ENCODE measurements at regions of chr2 and their contacts with region 1.

Region 1: DNA sequence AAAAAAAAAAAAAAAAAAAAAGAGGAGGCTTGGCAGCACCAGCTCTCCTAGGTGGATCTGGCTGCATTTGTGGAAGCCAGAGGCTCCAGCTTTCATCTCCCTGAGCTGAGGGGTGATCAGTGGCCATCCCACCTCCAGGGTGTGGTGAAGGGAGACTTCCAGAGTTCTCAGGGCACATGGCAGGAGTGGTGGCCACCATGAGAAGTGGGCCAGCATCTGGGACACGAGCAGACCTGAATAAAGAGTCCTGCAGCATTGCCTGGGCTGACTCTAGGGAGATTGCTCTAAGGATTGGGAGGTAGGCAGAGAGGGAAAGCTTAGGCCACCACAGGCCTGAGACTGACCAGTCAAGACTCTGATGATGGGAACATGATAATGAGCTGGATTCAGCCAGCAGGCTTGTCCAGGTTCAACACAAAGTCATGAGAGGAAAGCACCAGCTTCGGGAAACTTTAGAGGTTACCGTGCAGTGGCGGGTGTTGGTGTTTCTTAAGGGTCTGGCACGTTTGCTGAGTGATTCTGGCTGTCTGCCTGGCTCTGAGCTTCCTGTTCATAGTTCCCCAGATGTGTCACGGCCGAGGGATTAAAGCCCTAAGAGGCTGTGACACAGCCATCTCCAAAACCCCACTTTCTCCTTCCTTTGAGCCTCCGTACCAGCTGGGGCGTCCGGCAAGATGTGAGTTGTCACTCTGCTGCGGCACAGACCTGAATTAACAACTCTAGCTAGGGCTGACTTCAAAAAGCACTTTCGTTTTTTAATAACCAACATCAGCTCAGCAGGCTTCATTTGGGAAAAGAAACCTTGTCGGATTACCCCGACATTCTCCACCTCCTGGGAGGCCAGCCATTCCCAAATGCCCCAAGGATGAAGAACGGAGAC is 38.3 kb upstream of the IL1R1 start:
- DNase-seq: peak; percentile 94
- ATAC-seq: peak; percentile 64
- H3K4me3 ChIP-seq: peak overlapping the region; percentile 30
- H3K27ac ChIP-seq: peak overlapping the region; percentile 83
- H3K4me1 ChIP-seq: peaks cover 21% of the 10 kb centered on the region
- H3K27me3 ChIP-seq: no peaks in the 10 kb centered on the region
- CTCF ChIP-seq: no peak
- POLR2A ChIP-seq: peak; percentile 68; the same call in 1 of the 2 replicates
- RAD21 ChIP-seq: peak; percentile 14; the same call in 1 of the 2 replicates

Region 2: DNA sequence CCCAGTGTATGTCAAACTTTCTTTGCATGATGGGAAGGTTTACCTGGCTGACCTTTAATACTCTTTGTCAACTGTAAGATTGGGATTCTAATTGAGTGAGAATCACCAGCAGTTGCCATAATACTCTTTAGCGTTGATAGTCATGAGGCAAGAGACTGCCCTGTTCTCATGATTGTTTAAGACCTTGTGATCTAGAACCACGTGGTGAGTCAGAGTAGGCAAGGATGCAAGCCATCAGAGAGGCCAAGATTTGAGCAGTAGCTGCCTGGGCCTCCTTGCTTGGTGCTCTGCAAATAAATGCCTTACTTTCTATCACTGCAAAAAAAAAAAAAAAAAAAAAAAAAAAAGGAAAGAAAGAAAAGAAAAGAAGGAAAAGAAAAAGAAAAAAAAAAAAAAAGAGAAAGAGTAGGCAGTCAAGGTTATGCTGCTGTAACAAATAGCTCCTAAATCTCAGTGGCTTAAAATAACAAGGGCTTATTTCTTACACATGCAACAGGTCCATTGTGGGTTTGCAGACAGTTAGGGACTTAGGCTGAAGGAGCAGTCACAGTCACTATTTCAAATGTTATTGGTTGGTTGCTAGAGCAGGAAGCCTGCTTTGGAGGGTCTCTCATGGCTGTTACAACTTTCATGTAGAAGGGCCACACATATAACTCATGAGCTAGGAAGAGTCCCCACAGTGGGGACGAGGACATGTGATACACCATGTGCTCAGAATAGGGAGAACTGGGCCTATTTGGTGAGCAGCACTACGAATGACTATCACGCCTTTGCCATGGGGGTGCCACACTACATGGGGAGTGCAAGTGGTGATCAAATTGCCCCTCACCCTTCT is 90.8 kb before region 1 on chr2:
- CTCF ChIA-PET with region 1: no interaction called
- POLR2A ChIA-PET with region 1: no interaction called
- dilution Hi-C with region 1: no loop called
- in situ Hi-C with region 1: no loop called
- intact Hi-C with region 1: no loop called
- DNase-seq: no peak
- ATAC-seq: no peak
- H3K4me3 ChIP-seq: no peak overlapping the region
- H3K27ac ChIP-seq: no peak overlapping the region
- H3K4me1 ChIP-seq: no peaks in the 10 kb centered on the region
- H3K27me3 ChIP-seq: no peaks in the 10 kb centered on the region
- CTCF ChIP-seq: no peak
- POLR2A ChIP-seq: no peak
- RAD21 ChIP-seq: no peak

Region 3: GRCh38 chr2:102033031-102033749 is 71.0 kb before region 1 on chr2:
- CTCF ChIA-PET with region 1: no interaction called
- POLR2A ChIA-PET with region 1: no interaction called
- dilution Hi-C with region 1: no loop called
- in situ Hi-C with region 1: no loop called
- intact Hi-C with region 1: loop called (anchors 5 kb)
- DNase-seq: peak; percentile 79
- ATAC-seq: peak; percentile 89
- H3K4me3 ChIP-seq: no peak overlapping the region
- H3K27ac ChIP-seq: peak overlapping the region; percentile 53
- H3K4me1 ChIP-seq: peaks cover 14% of the 10 kb centered on the region
- H3K27me3 ChIP-seq: no peaks in the 10 kb centered on the region
- CTCF ChIP-seq: 0 out of 2 replicates have a peak, but pooled peaks have one; percentile 13
- POLR2A ChIP-seq: no peak
- RAD21 ChIP-seq: 0 out of 2 replicates have a peak, but pooled peaks have one; percentile 2

Region 4: DNA sequence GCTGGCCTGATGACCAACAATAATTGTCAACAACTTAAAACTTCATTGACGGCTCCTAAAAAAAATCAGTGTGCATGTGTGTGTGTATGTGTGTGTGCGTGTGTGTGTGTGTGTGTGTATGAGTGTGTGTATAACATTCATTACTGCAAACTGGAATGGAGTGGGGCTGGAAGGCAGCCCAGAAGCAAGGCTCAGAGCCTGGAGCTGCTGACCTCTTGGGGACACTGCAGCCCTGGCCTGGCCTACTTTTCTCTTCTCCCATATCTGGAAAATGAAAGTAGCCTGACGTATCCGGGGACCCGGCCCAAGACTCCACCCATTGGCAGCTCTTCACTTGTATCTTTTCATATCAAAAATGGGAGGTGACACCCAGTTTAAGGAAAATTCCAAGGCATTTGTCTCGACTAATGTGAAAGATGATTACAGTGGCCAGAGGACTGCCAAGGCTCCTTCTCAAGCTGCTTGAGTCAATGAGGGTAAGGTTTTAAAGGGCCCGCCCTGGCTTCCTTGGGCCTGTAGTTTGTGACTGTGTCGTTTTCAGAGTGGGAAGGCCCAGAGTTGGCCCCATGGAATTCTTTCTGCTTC is 34.1 kb before region 1 on chr2:
- CTCF ChIA-PET with region 1: interaction called, 3 read pairs
- POLR2A ChIA-PET with region 1: no interaction called
- dilution Hi-C with region 1: no loop called
- in situ Hi-C with region 1: no loop called
- intact Hi-C with region 1: loop called (anchors 2 kb)
- DNase-seq: peak; percentile 80
- ATAC-seq: peak; percentile 91
- H3K4me3 ChIP-seq: peak overlapping the region; percentile 6; the same call in 1 of the 2 replicates
- H3K27ac ChIP-seq: peak overlapping the region; percentile 80
- H3K4me1 ChIP-seq: peaks cover 20% of the 10 kb centered on the region
- H3K27me3 ChIP-seq: no peaks in the 10 kb centered on the region
- CTCF ChIP-seq: 0 out of 2 replicates have a peak, but pooled peaks have one; percentile 26
- POLR2A ChIP-seq: no peak
- RAD21 ChIP-seq: peak; percentile 30; the same call in 1 of the 2 replicates

Region 5: DNA sequence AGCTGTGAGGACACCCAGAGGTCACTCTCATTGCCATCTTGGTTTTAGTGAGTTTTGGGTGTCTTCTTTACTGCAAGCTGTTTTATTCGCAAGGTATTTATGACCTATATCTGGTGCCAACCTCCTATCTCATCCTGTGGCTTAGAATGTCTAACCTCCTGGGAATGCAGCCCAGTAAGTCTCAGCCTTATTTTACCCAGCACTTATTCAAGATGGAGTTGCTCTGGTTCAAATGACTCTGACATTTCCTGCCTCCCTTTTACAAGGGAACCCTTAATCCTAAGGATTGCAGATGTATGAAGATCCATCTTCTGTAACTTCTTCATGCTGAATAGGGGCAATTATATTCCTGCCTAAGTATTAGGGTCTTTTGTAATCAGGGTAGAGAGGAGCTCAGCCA is 1365.6 kb after region 1 on chr2:
- CTCF ChIA-PET with region 1: no interaction called
- POLR2A ChIA-PET with region 1: no interaction called
- dilution Hi-C with region 1: no loop called
- in situ Hi-C with region 1: no loop called
- intact Hi-C with region 1: no loop called
- DNase-seq: no peak
- ATAC-seq: no peak
- H3K4me3 ChIP-seq: no peak overlapping the region
- H3K27ac ChIP-seq: no peak overlapping the region
- H3K4me1 ChIP-seq: no peaks in the 10 kb centered on the region
- H3K27me3 ChIP-seq: no peaks in the 10 kb centered on the region
- CTCF ChIP-seq: no peak
- POLR2A ChIP-seq: no peak
- RAD21 ChIP-seq: no peak